ENCODE measurements at regions of chr2 and their contacts with region 1.

Region 1: DNA sequence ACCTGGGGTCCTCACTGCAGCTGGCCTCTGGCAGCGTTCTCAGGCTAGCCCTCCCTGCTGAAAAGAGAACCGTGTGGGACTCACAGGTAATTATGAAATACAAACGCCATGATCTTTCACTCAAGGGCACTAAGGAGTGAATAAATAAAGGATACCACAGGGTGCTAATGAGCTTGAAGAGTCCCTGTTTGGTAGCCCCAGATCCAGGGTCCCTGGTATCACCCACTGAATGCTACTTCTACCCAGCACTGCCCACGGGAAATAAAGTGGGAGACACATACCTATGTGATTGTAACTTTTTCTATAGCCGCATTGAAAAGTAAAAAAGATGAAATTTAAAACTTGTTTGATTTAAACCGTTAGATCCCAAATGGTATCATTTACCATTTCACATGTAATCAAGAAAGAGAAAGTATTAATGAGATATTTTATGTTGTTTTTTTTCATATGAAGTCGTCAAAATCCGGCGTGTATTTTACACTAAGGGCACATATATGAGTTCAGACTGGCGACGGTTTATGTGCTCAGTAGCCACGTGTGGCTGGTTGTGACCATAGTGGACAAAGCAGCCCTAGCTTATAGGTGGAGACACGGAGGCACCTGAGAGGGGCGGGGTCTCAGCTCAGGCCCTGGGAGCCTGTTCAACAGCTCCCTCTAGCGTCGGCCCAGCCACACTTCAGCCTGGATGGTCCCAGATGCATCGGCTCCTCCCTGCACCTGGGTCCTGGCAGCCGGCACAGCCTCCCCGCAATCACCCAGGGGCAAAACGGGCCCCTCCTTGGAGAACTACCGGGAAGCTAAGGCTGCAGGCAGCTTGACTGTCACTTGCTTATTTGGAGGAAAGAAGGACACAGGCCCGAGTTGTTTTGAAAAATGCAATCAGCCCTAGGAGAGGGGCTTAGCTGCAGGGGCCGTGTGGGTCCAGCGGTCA is 39.2 kb downstream of the ODC1 start:
- DNase-seq: peak; percentile 76
- H3K4me3 Mint-ChIP-seq: peak overlapping the region; percentile 80
- H3K27ac Mint-ChIP-seq: peak overlapping the region; percentile 93
- H3K4me1 Mint-ChIP-seq: peaks cover 54% of the 10 kb centered on the region
- H3K27me3 Mint-ChIP-seq: no peaks in the 10 kb centered on the region

Region 2: GRCh38 chr2:8836971-8837794 is 1571.7 kb before region 1 on chr2 and contains the start of gene KIDINS220:
- intact Hi-C with region 1: loop called (anchors 10 kb)
- DNase-seq: peak; percentile 72
- H3K4me3 Mint-ChIP-seq: peak within 1 kb of the TSS; percentile 100
- H3K27ac Mint-ChIP-seq: peak within 1 kb of the TSS; percentile 96
- H3K4me1 Mint-ChIP-seq: peaks cover 31% of the 10 kb centered on the region
- H3K27me3 Mint-ChIP-seq: no peaks in the 10 kb centered on the region
- total RNA-seq, gene KIDINS220: 24.3 and 24.5 TPM in 2 replicates

Region 3: GRCh38 chr2:10072656-10073480 is 336.0 kb before region 1 on chr2:
- intact Hi-C with region 1: loop called (anchors 1 kb)
- DNase-seq: peak; percentile 76
- H3K4me3 Mint-ChIP-seq: no peak overlapping the region
- H3K27ac Mint-ChIP-seq: no peak overlapping the region
- H3K4me1 Mint-ChIP-seq: peaks cover 16% of the 10 kb centered on the region
- H3K27me3 Mint-ChIP-seq: peaks cover 49% of the 10 kb centered on the region

Region 4: DNA sequence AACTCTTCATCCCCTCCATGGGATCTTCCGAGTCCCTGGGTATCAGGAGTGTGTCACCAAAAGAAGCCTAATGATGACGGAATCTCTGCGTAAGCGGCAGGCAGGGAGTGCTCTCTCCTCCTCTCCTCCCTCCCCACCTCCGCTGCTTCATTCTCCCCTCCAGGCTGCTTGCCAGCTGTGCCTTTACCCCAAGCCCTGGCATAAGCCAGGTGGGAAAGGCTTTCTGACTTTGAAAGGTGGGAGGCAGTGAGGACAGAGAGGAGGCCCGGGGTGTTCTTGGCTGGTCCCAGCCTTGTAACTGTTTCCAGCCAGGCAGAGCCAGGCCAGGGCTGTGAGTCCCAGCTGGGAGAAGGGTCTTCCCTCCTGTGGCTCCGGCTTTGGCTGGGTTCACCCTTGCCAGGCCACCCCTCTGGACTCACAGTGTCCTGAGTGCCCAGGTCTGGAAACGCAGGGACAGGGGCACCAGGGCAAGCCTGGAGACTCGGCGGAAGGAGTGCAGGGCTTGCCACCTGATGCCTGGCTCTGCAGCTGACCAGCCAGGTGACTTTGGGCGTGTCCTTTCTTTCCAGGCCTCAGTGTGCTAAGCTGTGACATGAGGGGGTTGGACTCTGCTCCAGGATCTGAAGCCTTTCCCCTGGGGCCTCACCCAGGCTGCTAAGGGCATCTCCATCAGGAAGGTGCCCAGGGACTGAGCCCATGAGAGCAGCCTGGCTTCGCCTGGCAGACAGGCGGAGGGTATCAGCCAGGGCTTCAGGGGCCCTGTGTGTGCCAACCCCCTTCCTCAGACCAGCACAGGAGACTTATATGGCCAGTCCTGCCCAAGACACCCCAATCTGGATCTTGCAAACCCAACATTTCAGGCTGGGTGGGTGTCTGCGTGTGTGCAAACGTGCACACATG is 139.0 kb before region 1 on chr2:
- intact Hi-C with region 1: loop called (anchors 1 kb)
- DNase-seq: no peak
- H3K4me3 Mint-ChIP-seq: no peak overlapping the region
- H3K27ac Mint-ChIP-seq: no peak overlapping the region
- H3K4me1 Mint-ChIP-seq: no peaks in the 10 kb centered on the region
- H3K27me3 Mint-ChIP-seq: peaks cover 3% of the 10 kb centered on the region

Region 5: DNA sequence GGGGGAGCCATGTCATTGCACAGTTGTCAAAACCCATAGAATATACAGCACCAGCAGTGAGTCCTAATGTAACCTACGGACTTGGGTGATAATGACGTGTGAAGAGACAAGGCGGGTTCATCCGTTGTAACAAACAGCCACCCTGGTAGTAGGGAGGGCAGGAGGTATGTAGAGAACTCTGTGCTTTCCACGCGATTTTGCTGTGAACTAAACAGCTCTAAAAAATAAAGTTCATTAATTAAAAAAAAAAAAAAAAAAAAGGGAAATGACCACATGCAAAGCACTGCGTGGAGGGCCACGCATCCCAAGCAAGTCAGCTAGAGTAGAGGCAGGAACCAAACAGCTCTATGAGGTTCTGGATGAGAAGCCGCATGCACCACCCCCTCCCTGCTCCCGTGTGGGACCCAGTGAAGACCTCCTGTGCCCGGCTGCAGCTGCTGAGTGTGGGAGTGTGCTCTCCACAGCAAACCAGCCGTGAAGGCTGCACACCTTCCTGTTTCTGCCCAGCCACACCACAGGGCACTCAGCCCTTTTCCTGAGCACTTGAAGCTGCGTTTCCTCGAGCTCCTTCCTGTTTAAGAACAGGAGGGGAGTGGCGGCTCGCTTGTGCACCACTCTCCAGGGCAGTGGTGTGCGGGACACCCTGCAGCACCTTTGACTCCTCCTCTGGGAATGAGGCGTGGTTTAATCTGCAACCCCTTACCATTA is 26.4 kb before region 1 on chr2:
- intact Hi-C with region 1: loop called (anchors 2 kb)
- DNase-seq: peak; percentile 10
- H3K4me3 Mint-ChIP-seq: peak overlapping the region; percentile 7
- H3K27ac Mint-ChIP-seq: no peak overlapping the region
- H3K4me1 Mint-ChIP-seq: peaks cover 69% of the 10 kb centered on the region
- H3K27me3 Mint-ChIP-seq: no peaks in the 10 kb centered on the region

Region 6: GRCh38 chr2:12352889-12353288 is 1944.0 kb after region 1 on chr2:
- intact Hi-C with region 1: no loop called
- DNase-seq: no peak
- H3K4me3 Mint-ChIP-seq: no peak overlapping the region
- H3K27ac Mint-ChIP-seq: no peak overlapping the region
- H3K4me1 Mint-ChIP-seq: no peaks in the 10 kb centered on the region
- H3K27me3 Mint-ChIP-seq: peaks cover 8% of the 10 kb centered on the region

Measured in activated T-helper 1 cell treated with anti-CD3 and anti-CD28 coated beads, Interleukin-12 subunit alpha, Interleukin-12 subunit beta, Interleukin-2, Interleukin-4 antibody, amounts not matched to agents 30 ng/mL and 10 ng/mL and 1 ng/mL, durations not matched to agents 14 hours and 24 hours and 36 hours (primary cell).